GM12878 (cell line): ENCODE measurements at regions of chr14 and their contacts with region 1.

Region 1: GRCh38 chr14:87896393-87897380 is 96.3 kb downstream of the GALC start:
- DNase-seq: no peak
- ATAC-seq: peak; percentile 77
- H3K4me3 ChIP-seq: no peak overlapping the region
- H3K27ac ChIP-seq: no peak overlapping the region
- H3K4me1 ChIP-seq: no peaks in the 10 kb centered on the region
- H3K27me3 ChIP-seq: no peaks in the 10 kb centered on the region
- CTCF ChIP-seq: peak; percentile 30 to 70 (median 61); a peak in 5 of 6 replicates
- EP300 ChIP-seq: no peak
- POLR2A ChIP-seq: no peak
- RAD21 ChIP-seq: peak; percentile 80

Region 2: DNA sequence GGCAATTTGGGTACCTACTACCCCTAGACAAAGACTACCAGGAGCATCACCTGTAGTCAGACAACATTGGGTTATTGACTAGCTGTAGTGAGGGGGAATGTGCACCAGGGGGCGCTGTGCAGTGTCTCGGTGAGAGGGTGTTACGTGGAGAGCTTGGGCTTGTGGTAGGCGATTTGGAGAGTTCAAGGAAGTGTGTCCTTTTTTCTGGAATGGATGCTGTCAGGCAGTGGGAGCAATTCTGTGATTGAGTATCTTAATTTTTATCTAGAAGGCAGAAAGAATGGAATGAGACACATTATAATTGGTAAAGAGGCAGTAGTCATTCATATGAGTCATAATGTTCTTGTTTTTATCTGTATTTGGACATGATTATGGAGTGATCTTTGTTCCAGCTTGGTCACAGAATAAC is 91.4 kb before region 1 on chr14:
- CTCF ChIA-PET with region 1: interaction called, 5 read pairs
- POLR2A ChIA-PET with region 1: no interaction called
- RAD21 ChIA-PET with region 1: no interaction called
- SMC1A ChIA-PET with region 1: interaction called, 6 read pairs
- in situ Hi-C with region 1: no loop called
- intact Hi-C with region 1: loop called (anchors 1 kb)
- DNase-seq: no peak
- ATAC-seq: peak; percentile 74
- H3K4me3 ChIP-seq: no peak overlapping the region
- H3K27ac ChIP-seq: no peak overlapping the region
- H3K4me1 ChIP-seq: no peaks in the 10 kb centered on the region
- H3K27me3 ChIP-seq: no peaks in the 10 kb centered on the region
- CTCF ChIP-seq: peak; percentile 36 to 72 (median 63)
- EP300 ChIP-seq: no peak
- POLR2A ChIP-seq: no peak
- RAD21 ChIP-seq: peak; percentile 42